Activated T-helper 1 cell treated with anti-CD3 and anti-CD28 coated beads, Interleukin-12 subunit alpha, Interleukin-12 subunit beta, Interleukin-2, Interleukin-4 antibody, amounts not matched to agents 30 ng/mL and 10 ng/mL and 1 ng/mL, durations not matched to agents 14 hours and 24 hours and 36 hours (primary cell): ENCODE measurements at regions of chr4 and their contacts with region 1.

Region 1: GRCh38 chr4:108570993-108571569 is 49.3 kb upstream of the RPL34 start:
- DNase-seq: no peak
- H3K4me3 Mint-ChIP-seq: no peak overlapping the region
- H3K27ac Mint-ChIP-seq: no peak overlapping the region
- H3K4me1 Mint-ChIP-seq: peaks cover 19% of the 10 kb centered on the region
- H3K27me3 Mint-ChIP-seq: no peaks in the 10 kb centered on the region

Region 2: DNA sequence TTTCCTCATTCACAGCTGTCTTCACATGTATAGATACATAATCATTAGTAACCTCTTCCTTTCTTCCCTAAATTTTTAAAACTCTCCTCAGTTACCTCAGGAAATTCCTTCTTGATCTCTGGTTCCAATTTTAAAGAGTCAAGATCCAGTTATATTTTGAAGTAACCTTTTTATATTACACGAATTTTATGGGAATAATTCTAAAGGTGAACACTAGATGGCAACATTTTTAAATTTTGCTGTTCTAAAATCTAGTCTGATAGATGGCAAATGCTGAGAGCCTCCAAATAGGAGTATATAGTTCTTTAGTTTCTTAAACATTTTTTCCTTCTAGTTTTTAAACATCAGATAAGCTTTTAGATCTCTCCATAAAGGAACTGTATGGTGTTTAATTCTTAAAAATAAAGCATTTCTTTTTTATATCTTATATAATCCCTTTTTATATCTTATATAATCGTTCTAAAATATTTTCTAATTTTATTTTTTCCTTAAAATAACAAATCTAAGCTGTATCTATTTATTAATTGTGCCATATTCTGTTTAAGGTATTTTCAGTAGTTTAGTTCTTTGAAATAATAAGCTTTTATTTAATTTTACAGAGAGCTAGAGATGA is 813.1 kb before region 1 on chr4:
- intact Hi-C with region 1: loop called (anchors 5 kb)
- DNase-seq: no peak
- H3K4me3 Mint-ChIP-seq: no peak overlapping the region
- H3K27ac Mint-ChIP-seq: no peak overlapping the region
- H3K4me1 Mint-ChIP-seq: no peaks in the 10 kb centered on the region
- H3K27me3 Mint-ChIP-seq: peaks cover 14% of the 10 kb centered on the region

Region 3: DNA sequence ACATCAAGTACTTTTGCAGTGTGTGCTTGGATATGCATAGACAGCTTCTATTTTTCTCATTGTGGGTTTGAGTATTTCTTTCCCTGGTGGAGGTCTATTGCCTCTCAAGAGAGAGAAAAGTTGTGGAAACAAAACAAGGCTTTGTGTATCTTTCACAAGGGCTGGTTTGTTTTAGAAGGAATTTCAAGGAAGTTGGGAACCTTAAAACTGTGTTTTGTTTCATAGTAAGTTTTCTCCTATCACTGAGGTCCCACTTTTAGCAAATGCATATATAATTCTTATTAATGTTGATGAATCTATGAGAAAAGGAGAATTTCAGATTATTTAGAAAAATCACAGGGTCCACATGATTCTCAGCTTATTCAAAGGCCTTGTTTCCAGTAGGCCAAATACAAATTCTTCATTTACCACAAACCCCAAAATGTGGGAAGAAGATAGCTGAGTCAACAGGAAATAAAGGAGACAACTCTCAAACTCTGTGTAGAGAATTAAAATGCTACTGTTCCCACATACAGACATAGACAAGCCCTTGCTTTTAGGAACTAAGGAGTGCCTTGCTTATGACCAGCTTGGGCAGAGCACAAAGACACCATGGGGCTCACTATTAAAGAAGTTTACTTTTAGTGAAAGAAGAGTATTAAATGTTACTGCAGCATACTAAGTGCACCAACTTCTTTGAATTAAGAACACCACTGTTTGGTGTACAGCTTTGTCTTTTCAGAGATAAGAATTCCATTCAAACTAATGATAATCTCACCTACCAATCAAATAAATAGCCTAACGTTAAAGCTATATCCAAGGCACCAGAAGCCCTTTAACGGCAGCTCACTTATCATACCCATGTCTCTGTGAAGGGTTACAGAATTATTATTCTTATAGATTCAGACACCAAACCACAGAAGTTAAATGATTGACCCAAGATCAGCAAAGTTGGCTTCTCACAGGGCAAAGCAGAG is 224.9 kb before region 1 on chr4:
- intact Hi-C with region 1: loop called (anchors 10 kb)
- DNase-seq: no peak
- H3K4me3 Mint-ChIP-seq: peak overlapping the region; percentile 28
- H3K27ac Mint-ChIP-seq: no peak overlapping the region
- H3K4me1 Mint-ChIP-seq: peaks cover 44% of the 10 kb centered on the region
- H3K27me3 Mint-ChIP-seq: no peaks in the 10 kb centered on the region

Region 4: GRCh38 chr4:108492816-108493595 is 78.1 kb before region 1 on chr4:
- intact Hi-C with region 1: loop called (anchors 5 kb)
- DNase-seq: no peak
- H3K4me3 Mint-ChIP-seq: no peak overlapping the region
- H3K27ac Mint-ChIP-seq: no peak overlapping the region
- H3K4me1 Mint-ChIP-seq: no peaks in the 10 kb centered on the region
- H3K27me3 Mint-ChIP-seq: peaks cover 2% of the 10 kb centered on the region

Region 5: GRCh38 chr4:108519911-108520601 is 51.0 kb before region 1 on chr4:
- intact Hi-C with region 1: no loop called
- DNase-seq: no peak
- H3K4me3 Mint-ChIP-seq: no peak overlapping the region
- H3K27ac Mint-ChIP-seq: no peak overlapping the region
- H3K4me1 Mint-ChIP-seq: peaks cover 11% of the 10 kb centered on the region
- H3K27me3 Mint-ChIP-seq: no peaks in the 10 kb centered on the region

Region 6: GRCh38 chr4:108556588-108557200 is 14.4 kb before region 1 on chr4:
- intact Hi-C with region 1: no loop called
- DNase-seq: no peak
- H3K4me3 Mint-ChIP-seq: no peak overlapping the region
- H3K27ac Mint-ChIP-seq: no peak overlapping the region
- H3K4me1 Mint-ChIP-seq: no peaks in the 10 kb centered on the region
- H3K27me3 Mint-ChIP-seq: peaks cover 3% of the 10 kb centered on the region